IMR-90 (cell line): ENCODE measurements at regions of chr14 and their contacts with region 1.

Region 1: GRCh38 chr14:52950898-52951689 is at the start of gene FERMT2:
- DNase-seq: peak; percentile 82
- ATAC-seq: peak; percentile 94
- H3K4me3 ChIP-seq: peak within 1 kb of the TSS; percentile 99
- H3K27ac ChIP-seq: peak within 1 kb of the TSS; percentile 99
- H3K4me1 ChIP-seq: peaks cover 7% of the 10 kb centered on the region; the same call in 1 of the 2 replicates
- H3K27me3 ChIP-seq: no peaks in the 10 kb centered on the region
- CTCF ChIP-seq: no peak
- POLR2A ChIP-seq: peak; percentile 81
- RAD21 ChIP-seq: no peak
- total RNA-seq, gene FERMT2: 217 and 229 TPM in 2 replicates

Region 2: DNA sequence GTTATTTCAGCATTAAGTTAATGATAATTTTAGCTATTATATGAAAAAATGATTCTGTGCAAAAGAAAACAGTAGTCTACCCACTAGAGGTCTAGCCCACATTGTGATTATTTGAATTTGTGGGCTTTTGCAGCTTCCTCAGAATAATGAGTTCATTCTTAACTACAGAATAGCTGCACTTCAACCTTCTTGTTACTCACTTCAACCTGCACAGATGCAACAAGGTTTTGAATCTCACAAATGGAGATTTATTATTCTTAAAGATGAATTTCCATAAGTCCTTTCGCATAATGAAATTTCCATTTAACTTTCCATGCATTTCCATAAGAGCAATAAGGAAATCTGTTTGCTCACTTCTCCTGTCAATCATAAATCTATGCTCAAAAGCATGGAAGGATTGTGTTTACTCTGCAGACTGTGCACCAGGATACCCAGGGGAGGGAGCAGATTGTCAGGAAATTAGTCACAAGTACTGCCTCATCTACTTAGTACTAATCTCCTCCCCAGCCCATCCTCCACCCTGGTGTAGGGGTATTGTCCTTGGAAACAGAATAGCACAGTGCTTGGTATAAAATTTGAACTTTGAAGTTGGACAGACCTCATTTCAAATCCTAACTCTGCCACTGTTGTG is 612.9 kb before region 1 on chr14:
- CTCF ChIA-PET with region 1: no interaction called
- POLR2A ChIA-PET with region 1: no interaction called
- dilution Hi-C with region 1: no loop called
- in situ Hi-C with region 1: no loop called
- intact Hi-C with region 1: no loop called
- DNase-seq: peak; percentile 70
- ATAC-seq: peak; percentile 84
- H3K4me3 ChIP-seq: no peak overlapping the region
- H3K27ac ChIP-seq: no peak overlapping the region
- H3K4me1 ChIP-seq: peaks cover 16% of the 10 kb centered on the region
- H3K27me3 ChIP-seq: no peaks in the 10 kb centered on the region
- CTCF ChIP-seq: no peak
- POLR2A ChIP-seq: no peak
- RAD21 ChIP-seq: no peak

Region 3: DNA sequence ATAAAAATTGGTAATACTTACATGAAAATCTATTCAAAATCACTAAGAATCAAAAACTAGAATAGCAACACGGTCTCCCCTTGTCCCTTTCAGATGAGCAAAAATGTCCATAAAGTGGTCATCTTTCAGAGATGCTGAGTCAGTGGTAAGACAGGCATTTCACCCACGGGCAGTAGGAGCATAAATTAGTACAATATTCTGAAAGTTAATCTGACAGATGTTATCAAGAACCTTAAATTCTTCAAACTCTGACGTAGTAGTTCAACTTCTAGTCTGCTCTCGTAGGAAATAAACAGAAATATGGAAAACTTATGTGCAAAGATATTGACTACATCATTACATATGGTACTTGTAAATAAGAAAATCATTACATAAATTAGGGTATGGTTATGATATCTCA is 126.6 kb before region 1 on chr14:
- CTCF ChIA-PET with region 1: interaction called, 3 read pairs
- POLR2A ChIA-PET with region 1: interaction called, 4 read pairs
- dilution Hi-C with region 1: no loop called
- in situ Hi-C with region 1: loop called (anchors 10 kb)
- intact Hi-C with region 1: loop called (anchors 10 kb)
- DNase-seq: peak; percentile 18
- ATAC-seq: no peak; the same call in 1 of the 2 replicates
- H3K4me3 ChIP-seq: no peak overlapping the region
- H3K27ac ChIP-seq: no peak overlapping the region
- H3K4me1 ChIP-seq: peaks cover 3% of the 10 kb centered on the region
- H3K27me3 ChIP-seq: no peaks in the 10 kb centered on the region
- CTCF ChIP-seq: no peak
- POLR2A ChIP-seq: no peak
- RAD21 ChIP-seq: no peak

Region 4: DNA sequence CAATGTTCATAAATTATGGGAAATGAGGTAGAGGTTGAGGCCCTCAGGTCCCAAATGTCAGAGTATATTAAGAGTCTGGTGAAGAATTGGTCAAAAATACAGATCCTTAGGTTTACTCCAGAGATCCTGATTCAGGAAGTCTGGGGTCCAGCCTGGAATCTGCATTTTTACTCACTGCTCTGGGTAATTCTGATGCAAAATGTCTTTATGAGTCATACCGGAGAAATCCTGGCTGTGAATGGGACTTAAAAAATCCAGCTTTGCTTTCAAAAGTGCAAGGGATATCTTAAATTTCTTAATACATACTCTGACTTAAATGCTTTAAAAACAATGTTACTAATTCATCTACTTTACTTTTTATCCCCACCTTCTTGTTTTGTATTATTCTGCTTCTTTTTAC is 74.8 kb before region 1 on chr14:
- CTCF ChIA-PET with region 1: no interaction called
- POLR2A ChIA-PET with region 1: no interaction called
- dilution Hi-C with region 1: no loop called
- in situ Hi-C with region 1: no loop called
- intact Hi-C with region 1: loop called (anchors 5 kb)
- DNase-seq: peak; percentile 77
- ATAC-seq: peak; percentile 66
- H3K4me3 ChIP-seq: no peak overlapping the region
- H3K27ac ChIP-seq: peak overlapping the region; percentile 60; the same call in 1 of the 2 replicates
- H3K4me1 ChIP-seq: peaks cover 16% of the 10 kb centered on the region
- H3K27me3 ChIP-seq: no peaks in the 10 kb centered on the region
- CTCF ChIP-seq: no peak
- POLR2A ChIP-seq: no peak
- RAD21 ChIP-seq: no peak

Region 5: DNA sequence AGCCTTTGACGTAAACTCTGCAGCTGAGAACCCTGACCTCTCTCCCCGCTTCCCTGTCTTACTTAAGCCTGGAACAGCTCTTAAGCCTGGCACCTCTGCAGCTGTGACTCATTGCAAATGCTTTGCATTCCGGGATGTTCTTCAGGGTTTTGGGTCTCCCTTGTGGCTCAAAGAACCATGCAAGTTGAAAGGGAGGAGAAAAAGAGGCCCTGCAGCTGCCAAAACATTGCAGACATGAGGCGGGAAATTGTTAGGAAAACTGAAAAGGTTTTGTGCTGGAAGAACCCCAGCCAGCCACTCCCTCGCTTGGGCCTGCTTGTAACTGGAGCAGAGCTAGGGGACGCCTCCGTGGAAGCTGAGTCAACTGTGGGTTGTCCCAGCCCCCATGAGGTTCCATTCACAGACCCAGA is 60.0 kb after region 1 on chr14:
- CTCF ChIA-PET with region 1: no interaction called
- POLR2A ChIA-PET with region 1: interaction called, 3 read pairs
- dilution Hi-C with region 1: no loop called
- in situ Hi-C with region 1: no loop called
- intact Hi-C with region 1: loop called (anchors 2 kb)
- DNase-seq: peak; percentile 99
- ATAC-seq: peak; percentile 93
- H3K4me3 ChIP-seq: no peak overlapping the region
- H3K27ac ChIP-seq: peak overlapping the region; percentile 73
- H3K4me1 ChIP-seq: peaks cover 7% of the 10 kb centered on the region
- H3K27me3 ChIP-seq: no peaks in the 10 kb centered on the region
- CTCF ChIP-seq: no peak
- POLR2A ChIP-seq: no peak
- RAD21 ChIP-seq: no peak

Region 6: GRCh38 chr14:53044486-53044885 is 93.4 kb after region 1 on chr14:
- CTCF ChIA-PET with region 1: no interaction called
- POLR2A ChIA-PET with region 1: interaction called, 3 read pairs
- dilution Hi-C with region 1: no loop called
- in situ Hi-C with region 1: no loop called
- intact Hi-C with region 1: loop called (anchors 2 kb)
- DNase-seq: peak; percentile 91
- ATAC-seq: peak; percentile 70
- H3K4me3 ChIP-seq: no peak overlapping the region
- H3K27ac ChIP-seq: peak overlapping the region; percentile 82
- H3K4me1 ChIP-seq: peaks cover 19% of the 10 kb centered on the region
- H3K27me3 ChIP-seq: no peaks in the 10 kb centered on the region
- CTCF ChIP-seq: no peak
- POLR2A ChIP-seq: no peak
- RAD21 ChIP-seq: no peak

Region 7: DNA sequence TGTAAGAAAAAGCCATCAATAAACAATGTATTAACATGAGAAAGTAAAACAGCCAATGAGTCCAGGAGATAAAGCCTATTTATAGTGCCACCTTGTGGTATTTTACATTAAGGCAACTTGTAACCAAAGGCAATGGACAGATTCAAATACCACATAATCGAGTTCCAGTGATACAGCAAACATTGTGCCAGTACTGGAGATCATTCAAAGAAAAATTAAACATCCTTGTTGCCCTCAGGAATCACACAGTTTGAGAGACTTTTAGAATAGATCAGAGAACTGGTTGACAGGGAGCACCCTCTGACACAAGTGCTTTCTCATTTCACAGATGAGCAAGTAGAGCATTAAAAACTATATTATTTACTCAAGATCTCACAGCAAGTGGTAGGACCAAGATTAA is 103.9 kb after region 1 on chr14:
- CTCF ChIA-PET with region 1: no interaction called
- POLR2A ChIA-PET with region 1: interaction called, 4 read pairs
- dilution Hi-C with region 1: no loop called
- in situ Hi-C with region 1: no loop called
- intact Hi-C with region 1: loop called (anchors 1 kb)
- DNase-seq: peak; percentile 72
- ATAC-seq: peak; percentile 95
- H3K4me3 ChIP-seq: no peak overlapping the region
- H3K27ac ChIP-seq: no peak overlapping the region
- H3K4me1 ChIP-seq: peaks cover 3% of the 10 kb centered on the region
- H3K27me3 ChIP-seq: no peaks in the 10 kb centered on the region
- CTCF ChIP-seq: peak; percentile 80
- POLR2A ChIP-seq: no peak
- RAD21 ChIP-seq: peak; percentile 90

Region 8: DNA sequence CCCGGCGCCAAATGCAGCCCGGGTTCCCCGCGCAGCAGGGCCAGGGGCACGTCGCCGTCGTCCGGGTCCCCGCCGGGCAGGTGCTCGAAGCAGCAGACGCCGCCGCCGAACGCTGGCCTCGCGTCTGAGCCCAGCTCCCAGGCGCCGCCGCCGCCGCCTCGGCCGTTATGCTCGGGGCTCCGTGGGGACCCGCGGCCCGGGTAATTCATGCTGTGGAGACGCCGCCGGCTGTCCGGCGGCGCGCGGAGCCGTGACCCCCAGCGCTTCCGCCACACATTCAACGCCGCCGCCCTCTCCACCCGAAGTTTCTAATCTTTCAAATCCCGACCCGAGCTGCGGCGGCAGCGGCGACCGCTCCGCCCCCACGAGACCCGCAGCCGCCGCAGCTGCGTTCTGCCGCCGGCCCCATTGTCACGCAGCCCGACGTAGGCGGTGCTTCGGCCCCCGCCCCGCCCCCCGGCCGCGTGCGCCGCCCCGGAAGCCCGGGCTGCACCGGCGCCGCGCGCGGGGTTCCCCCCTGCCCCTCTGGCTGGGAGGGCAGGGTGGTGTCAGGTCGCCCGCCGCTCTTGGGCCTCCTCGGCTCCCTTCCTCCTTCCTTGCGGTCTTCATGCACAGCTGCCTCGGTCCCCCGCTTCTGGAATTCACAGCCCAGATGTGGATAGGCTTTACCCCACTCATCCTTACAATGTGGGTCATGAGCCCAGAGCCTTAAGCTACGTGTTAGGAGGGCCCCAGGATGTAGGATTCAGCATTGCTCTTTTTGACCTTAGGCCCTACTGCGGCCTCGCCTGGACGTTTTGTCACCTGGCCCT is 202.0 kb after region 1 on chr14 and contains the start of gene DDHD1:
- CTCF ChIA-PET with region 1: no interaction called
- POLR2A ChIA-PET with region 1: no interaction called
- dilution Hi-C with region 1: no loop called
- in situ Hi-C with region 1: no loop called
- intact Hi-C with region 1: loop called (anchors 5 kb)
- DNase-seq: peak; percentile 65
- ATAC-seq: peak; percentile 88
- H3K4me3 ChIP-seq: peak within 1 kb of the TSS; percentile 95
- H3K27ac ChIP-seq: peak within 1 kb of the TSS; percentile 72
- H3K4me1 ChIP-seq: peaks cover 5% of the 10 kb centered on the region; the same call in 1 of the 2 replicates
- H3K27me3 ChIP-seq: no peaks in the 10 kb centered on the region
- CTCF ChIP-seq: no peak
- POLR2A ChIP-seq: 0 out of 2 replicates have a peak, but pooled peaks have one; percentile 22
- RAD21 ChIP-seq: no peak
- total RNA-seq, gene DDHD1: 9.0 and 14.2 TPM in 2 replicates

Region 9: GRCh38 chr14:53999061-53999488 is 1048.0 kb after region 1 on chr14:
- CTCF ChIA-PET with region 1: no interaction called
- POLR2A ChIA-PET with region 1: no interaction called
- dilution Hi-C with region 1: no loop called
- in situ Hi-C with region 1: no loop called
- intact Hi-C with region 1: no loop called
- DNase-seq: peak; percentile 76
- ATAC-seq: peak; percentile 93
- H3K4me3 ChIP-seq: no peak overlapping the region
- H3K27ac ChIP-seq: peak overlapping the region; percentile 84
- H3K4me1 ChIP-seq: peaks cover 19% of the 10 kb centered on the region
- H3K27me3 ChIP-seq: no peaks in the 10 kb centered on the region
- CTCF ChIP-seq: no peak
- POLR2A ChIP-seq: no peak
- RAD21 ChIP-seq: no peak